ENCODE measurements at regions of chr12 and their contacts with region 1.

Region 1: DNA sequence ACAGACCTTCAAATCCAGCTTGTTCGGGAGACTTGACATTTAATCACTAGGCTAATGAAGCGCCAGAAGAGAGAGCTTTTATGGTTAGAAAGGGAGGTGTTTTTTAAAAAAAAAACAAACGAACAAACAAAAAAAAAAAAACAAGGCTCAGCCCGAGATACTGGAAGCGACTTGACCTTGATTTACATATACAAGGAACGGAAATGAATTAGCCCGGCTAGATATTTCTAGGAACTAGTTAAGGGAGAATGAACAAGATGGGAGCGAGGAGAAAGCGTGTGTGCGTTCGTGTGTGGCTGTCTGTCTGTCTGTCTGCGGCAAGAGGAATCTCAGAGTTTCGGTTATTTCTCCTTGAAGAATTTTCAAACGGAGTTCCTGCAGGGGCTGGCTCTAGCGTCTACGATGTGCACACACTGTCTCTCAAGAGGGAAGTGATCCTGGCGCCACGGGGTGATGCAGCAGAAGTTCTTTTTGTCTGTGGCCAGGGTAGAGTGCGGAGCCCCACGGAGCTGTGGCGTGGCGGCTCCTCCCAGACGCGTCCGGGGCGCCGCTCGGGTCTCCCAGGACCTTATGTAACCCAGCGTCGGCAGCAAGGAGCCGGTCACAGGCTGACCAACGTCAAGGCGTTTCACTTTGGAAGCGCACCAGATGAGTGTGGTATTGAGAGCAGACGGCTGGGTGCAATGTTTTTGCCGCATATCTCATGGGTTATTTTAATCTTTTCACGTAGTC is 18.8 kb downstream of the SOCS2 start:
- DNase-seq: peak; percentile 92
- ATAC-seq: peak; percentile 97

Region 2: DNA sequence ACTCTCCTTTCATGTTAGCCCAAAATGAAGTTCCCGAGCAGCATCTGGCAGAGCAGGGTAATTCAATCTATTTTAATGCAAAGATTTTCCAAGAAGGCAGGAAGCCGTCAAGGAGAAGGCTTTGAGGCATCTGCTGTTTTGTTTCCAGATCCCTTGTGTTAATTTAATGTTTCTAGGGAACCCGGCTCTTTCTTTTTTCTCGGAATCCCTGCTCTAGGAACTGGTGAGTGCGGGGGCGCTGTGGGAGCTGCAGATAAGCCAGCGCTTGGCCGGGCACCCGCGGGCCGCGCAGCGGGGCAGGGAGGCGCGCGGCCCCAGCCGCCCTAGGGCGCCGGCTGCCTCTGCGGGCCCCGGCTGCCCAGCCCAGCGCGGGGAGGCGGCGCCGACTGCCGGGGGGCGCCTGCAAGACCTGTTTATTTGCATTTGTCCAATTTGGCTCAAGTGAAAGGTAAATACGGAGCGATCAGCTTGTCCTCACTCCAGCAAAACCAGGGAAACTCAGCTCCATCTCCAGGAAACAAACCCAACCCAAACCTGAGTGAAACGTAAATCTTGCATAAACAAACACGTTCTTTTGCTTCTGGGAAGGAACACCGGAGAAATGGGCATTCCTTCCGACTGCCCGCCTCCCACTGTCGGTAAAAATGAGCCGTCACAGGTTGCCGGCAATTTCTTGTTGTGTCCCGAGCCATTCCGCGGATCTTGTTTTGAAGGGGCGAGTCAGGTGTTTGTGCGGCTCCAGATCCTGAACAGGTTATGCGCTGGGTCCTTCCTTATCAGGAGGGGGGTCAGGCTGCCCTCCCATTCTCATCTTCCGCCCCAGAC is 151.0 kb after region 1 on chr12:
- intact Hi-C with region 1: loop called (anchors 5 kb)
- DNase-seq: peak; percentile 88
- ATAC-seq: peak; percentile 92